HCT116 (cell line): ENCODE measurements at regions of chr17 and their contacts with region 1.

Region 1: GRCh38 chr17:10349403-10349802 is 23.4 kb downstream of the MYH13 start:
- DNase-seq: peak; percentile 19
- ATAC-seq: peak; percentile 84
- H3K4me3 ChIP-seq: no peak overlapping the region
- H3K27ac ChIP-seq: no peak overlapping the region
- H3K4me1 ChIP-seq: no peaks in the 10 kb centered on the region
- H3K27me3 ChIP-seq: no peaks in the 10 kb centered on the region
- CTCF ChIP-seq: peak; percentile 16 to 57 (median 45); a peak in 4 of 6 replicates
- POLR2A ChIP-seq: no peak
- RAD21 ChIP-seq: peak; percentile 25; the same call in 1 of the 2 replicates

Region 2: DNA sequence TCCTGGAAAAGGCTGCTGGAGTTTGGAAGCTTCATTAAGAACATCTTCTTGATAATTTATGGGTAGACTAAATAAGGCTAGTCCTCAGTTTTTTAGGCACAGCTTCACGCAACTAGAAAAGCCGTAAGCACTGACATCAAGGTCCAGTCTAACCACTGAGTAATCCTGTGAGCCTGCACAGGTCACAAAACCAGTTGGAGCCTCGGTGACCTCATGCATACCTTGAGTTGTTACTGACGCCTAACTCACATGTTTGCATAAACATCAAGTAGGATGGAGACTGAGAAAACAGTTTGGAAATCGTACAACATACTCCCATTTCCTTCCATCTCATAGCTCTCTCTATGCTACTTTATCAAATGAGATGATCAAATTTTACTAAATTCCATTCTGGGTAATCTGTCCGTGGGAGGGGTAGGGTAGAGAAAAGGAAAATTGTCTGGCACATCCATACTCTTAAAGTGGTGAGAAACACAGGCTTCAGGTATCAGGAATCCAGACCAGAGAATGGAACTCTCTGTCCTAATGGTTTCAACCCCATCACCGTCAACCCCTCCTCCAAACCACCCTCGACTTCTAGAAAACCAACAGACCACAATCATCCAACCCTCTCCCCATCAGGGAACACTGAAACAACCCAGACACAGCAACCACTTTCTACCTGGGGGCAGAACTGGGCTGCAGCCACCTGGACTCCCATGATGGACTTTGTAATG is 380.3 kb before region 1 on chr17:
- CTCF ChIA-PET with region 1: no interaction called
- POLR2A ChIA-PET with region 1: no interaction called
- RAD21 ChIA-PET with region 1: no interaction called
- intact Hi-C with region 1: loop called (anchors 10 kb)
- DNase-seq: no peak
- ATAC-seq: no peak
- H3K4me3 ChIP-seq: no peak overlapping the region
- H3K27ac ChIP-seq: no peak overlapping the region
- H3K4me1 ChIP-seq: peaks cover 8 to 9% of the 10 kb centered on the region in 2 experiments
- H3K27me3 ChIP-seq: no peaks in the 10 kb centered on the region
- CTCF ChIP-seq: no peak
- POLR2A ChIP-seq: no peak
- RAD21 ChIP-seq: no peak

Region 3: DNA sequence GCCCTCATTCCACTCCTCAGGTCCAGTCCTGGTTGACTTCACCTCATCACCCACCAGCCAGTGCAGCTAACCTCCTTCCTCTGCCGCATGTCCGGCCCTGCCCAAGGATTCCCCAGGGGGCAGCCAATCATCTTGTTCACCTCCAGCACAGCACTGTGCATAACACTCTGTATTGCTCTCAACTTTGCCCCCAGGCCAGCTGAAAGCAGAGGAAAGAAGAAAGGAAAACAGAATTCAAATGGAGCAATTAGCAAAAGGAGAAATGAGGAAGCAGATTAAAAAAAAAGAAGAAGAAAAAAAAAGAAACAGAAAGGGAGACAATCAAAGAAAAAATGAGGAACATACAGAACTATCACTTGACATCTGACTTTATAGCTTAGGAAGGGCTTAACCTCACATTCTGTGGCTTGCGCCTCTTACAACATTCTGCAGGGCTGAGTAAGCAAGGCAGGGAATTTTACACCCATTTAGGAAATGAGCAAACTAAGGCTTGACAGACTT is 177.1 kb before region 1 on chr17:
- CTCF ChIA-PET with region 1: no interaction called
- POLR2A ChIA-PET with region 1: no interaction called
- RAD21 ChIA-PET with region 1: no interaction called
- intact Hi-C with region 1: no loop called
- DNase-seq: no peak
- ATAC-seq: peak; percentile 59
- H3K4me3 ChIP-seq: no peak overlapping the region
- H3K27ac ChIP-seq: no peak overlapping the region
- H3K4me1 ChIP-seq: peaks cover 0 to 8% of the 10 kb centered on the region in 2 experiments; a peak in 2 of 4 replicates
- H3K27me3 ChIP-seq: peaks cover 9% of the 10 kb centered on the region; the same call in 1 of the 2 replicates
- CTCF ChIP-seq: no peak
- POLR2A ChIP-seq: no peak
- RAD21 ChIP-seq: no peak

Region 4: GRCh38 chr17:10286324-10286723 is 63.1 kb before region 1 on chr17:
- CTCF ChIA-PET with region 1: no interaction called
- POLR2A ChIA-PET with region 1: no interaction called
- RAD21 ChIA-PET with region 1: no interaction called
- intact Hi-C with region 1: no loop called
- DNase-seq: no peak
- ATAC-seq: peak; percentile 25; the same call in 1 of the 2 replicates
- H3K4me3 ChIP-seq: no peak overlapping the region
- H3K27ac ChIP-seq: no peak overlapping the region
- H3K4me1 ChIP-seq: 0 out of 4 replicates have a peak, but pooled peaks cover 0 to under 1% of the 10 kb centered on the region in 2 experiments
- H3K27me3 ChIP-seq: peaks cover 7% of the 10 kb centered on the region
- CTCF ChIP-seq: no peak
- POLR2A ChIP-seq: no peak
- RAD21 ChIP-seq: no peak

Region 5: DNA sequence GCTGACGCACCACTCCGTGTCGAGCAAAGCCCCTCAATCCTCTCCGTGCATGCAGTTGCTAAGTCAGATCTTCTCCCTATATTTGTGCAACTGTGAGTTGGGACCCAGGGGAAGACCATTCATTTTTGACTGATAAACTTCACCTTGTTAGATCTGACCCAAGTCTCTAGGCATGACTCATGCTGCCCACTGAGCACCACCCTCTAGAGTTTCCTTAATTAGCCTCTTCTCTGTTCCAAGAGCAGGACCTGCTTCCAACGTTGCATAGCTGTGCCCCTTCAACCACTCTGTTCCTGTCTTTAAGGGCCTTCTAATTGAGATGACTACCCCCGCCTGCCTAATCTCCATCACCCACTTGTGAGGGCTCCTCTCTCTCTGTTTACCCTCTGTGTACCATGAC is 20.8 kb after region 1 on chr17:
- CTCF ChIA-PET with region 1: no interaction called
- POLR2A ChIA-PET with region 1: no interaction called
- RAD21 ChIA-PET with region 1: no interaction called
- intact Hi-C with region 1: no loop called
- DNase-seq: no peak
- ATAC-seq: no peak; the same call in 1 of the 2 replicates
- H3K4me3 ChIP-seq: no peak overlapping the region
- H3K27ac ChIP-seq: no peak overlapping the region
- H3K4me1 ChIP-seq: peaks cover 5 to 15% of the 10 kb centered on the region in 2 experiments; a peak in 3 of 4 replicates
- H3K27me3 ChIP-seq: peaks cover 4% of the 10 kb centered on the region; the same call in 1 of the 2 replicates
- CTCF ChIP-seq: no peak
- POLR2A ChIP-seq: no peak
- RAD21 ChIP-seq: no peak

Region 6: GRCh38 chr17:10652984-10653659 is 303.7 kb after region 1 on chr17:
- CTCF ChIA-PET with region 1: no interaction called
- POLR2A ChIA-PET with region 1: no interaction called
- RAD21 ChIA-PET with region 1: no interaction called
- intact Hi-C with region 1: no loop called
- DNase-seq: no peak
- ATAC-seq: no peak
- H3K4me3 ChIP-seq: no peak overlapping the region
- H3K27ac ChIP-seq: no peak overlapping the region
- H3K4me1 ChIP-seq: no peaks in the 10 kb centered on the region
- H3K27me3 ChIP-seq: no peaks in the 10 kb centered on the region
- CTCF ChIP-seq: no peak
- POLR2A ChIP-seq: no peak
- RAD21 ChIP-seq: no peak